H1 (cell line): ENCODE measurements at regions of chr12 and their contacts with region 1.

Region 1: DNA sequence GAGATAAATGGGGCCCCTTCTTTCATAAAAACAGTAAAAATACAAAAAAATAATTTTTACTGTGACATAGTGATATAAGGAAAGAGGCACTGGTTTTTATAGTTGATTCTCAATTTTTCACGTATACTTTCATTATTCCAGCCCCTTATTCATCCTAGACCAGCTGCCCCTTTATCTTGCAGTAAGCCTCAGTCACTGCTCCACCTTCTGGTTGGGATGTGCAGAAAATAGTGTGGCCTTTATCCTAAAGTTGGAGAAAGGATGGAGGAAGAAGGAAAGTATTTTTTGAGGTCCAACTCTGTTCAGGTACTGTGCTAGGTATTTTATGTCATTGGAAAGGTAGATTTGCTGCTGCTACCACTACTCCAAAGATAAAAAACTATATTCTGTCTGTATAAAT is 172.7 kb downstream of the ANO6 start:
- DNase-seq: no peak
- H3K4me3 ChIP-seq: no peak overlapping the region; a peak in 1 of 8 replicates
- H3K27ac ChIP-seq: no peak overlapping the region
- H3K4me1 ChIP-seq: no peaks in the 10 kb centered on the region
- H3K27me3 ChIP-seq: no peaks in the 10 kb centered on the region
- CTCF ChIP-seq: peak in 2 of 3 experiments; percentile 66 to 68; a peak in 3 of 4 replicates
- EP300 ChIP-seq: no peak
- POLR2A ChIP-seq: no peak
- RAD21 ChIP-seq: peak; percentile 67 to 72

Region 2: GRCh38 chr12:45170456-45171042 is 218.0 kb before region 1 on chr12:
- CTCF ChIA-PET with region 1: interaction called, 34 read pairs
- POLR2A ChIA-PET with region 1: interaction called, 5 read pairs
- DNase-seq: peak; percentile 39 to 94
- H3K4me3 ChIP-seq: no peak overlapping the region
- H3K27ac ChIP-seq: no peak overlapping the region
- H3K4me1 ChIP-seq: no peaks in the 10 kb centered on the region
- H3K27me3 ChIP-seq: no peaks in the 10 kb centered on the region
- CTCF ChIP-seq: peak; percentile 78 to 89 (median 82)
- EP300 ChIP-seq: no peak
- POLR2A ChIP-seq: no peak
- RAD21 ChIP-seq: peak; percentile 85 to 87

Region 3: DNA sequence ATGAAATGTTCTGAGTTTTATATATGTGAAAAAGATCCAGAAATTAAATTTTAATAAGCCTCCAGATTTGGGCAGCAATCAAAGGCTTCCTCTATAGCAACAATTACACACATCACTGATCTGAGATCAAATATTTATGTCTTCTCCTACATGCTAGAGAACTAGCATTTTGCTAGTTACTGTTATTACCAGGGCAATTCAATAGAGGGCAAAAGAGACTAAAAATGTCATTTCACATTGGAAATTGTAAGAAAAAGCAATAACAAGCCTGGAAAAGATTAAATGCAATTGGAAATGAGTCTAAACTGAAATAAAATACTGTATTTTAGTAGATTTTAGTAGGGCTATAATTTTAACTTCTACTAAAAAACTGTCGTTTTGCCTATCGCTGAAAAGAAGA is 205.3 kb before region 1 on chr12:
- CTCF ChIA-PET with region 1: interaction called, 12 read pairs
- POLR2A ChIA-PET with region 1: no interaction called
- DNase-seq: no peak
- H3K4me3 ChIP-seq: no peak overlapping the region
- H3K27ac ChIP-seq: no peak overlapping the region
- H3K4me1 ChIP-seq: no peaks in the 10 kb centered on the region
- H3K27me3 ChIP-seq: no peaks in the 10 kb centered on the region
- CTCF ChIP-seq: peak in 1 of 3 experiments; percentile 31; a peak in 2 of 4 replicates
- EP300 ChIP-seq: no peak
- POLR2A ChIP-seq: no peak
- RAD21 ChIP-seq: peak in 1 of 2 experiments; percentile 44; a peak in 3 of 4 replicates

Region 4: GRCh38 chr12:45215419-45216229 is 172.9 kb before region 1 on chr12 and contains the start of gene ANO6:
- CTCF ChIA-PET with region 1: interaction called, 10 read pairs
- POLR2A ChIA-PET with region 1: no interaction called
- DNase-seq: peak in 1 of 2 experiments; percentile 89
- H3K4me3 ChIP-seq: peak within 1 kb of the TSS; percentile 70 to 98 (median 84)
- H3K27ac ChIP-seq: peak within 1 kb of the TSS; percentile 86
- H3K4me1 ChIP-seq: peaks cover 0 to 15% (median 9%) of the 10 kb centered on the region in 4 experiments; a peak in 4 of 7 replicates
- H3K27me3 ChIP-seq: no peaks in the 10 kb centered on the region
- CTCF ChIP-seq: peak in 1 of 3 experiments; percentile 4; a peak in 1 of 4 replicates
- EP300 ChIP-seq: no peak
- POLR2A ChIP-seq: peak; percentile 74 to 80
- RAD21 ChIP-seq: 0 out of 4 replicates have a peak, but pooled peaks of 1 of the 2 experiments have one; percentile 7
- total RNA-seq, gene ANO6: 37.6 and 39.7 TPM in 2 replicates

Region 5: GRCh38 chr12:45268672-45269411 is 119.7 kb before region 1 on chr12:
- CTCF ChIA-PET with region 1: interaction called, 16 read pairs
- POLR2A ChIA-PET with region 1: no interaction called
- DNase-seq: no peak
- H3K4me3 ChIP-seq: no peak overlapping the region
- H3K27ac ChIP-seq: no peak overlapping the region
- H3K4me1 ChIP-seq: peaks cover 0 to 11% (median 4%) of the 10 kb centered on the region in 4 experiments; a peak in 3 of 7 replicates
- H3K27me3 ChIP-seq: no peaks in the 10 kb centered on the region
- CTCF ChIP-seq: peak in 2 of 3 experiments; percentile 14 to 36; a peak in 2 of 4 replicates
- EP300 ChIP-seq: no peak
- POLR2A ChIP-seq: no peak
- RAD21 ChIP-seq: peak; percentile 53 to 60

Region 6: GRCh38 chr12:45284131-45284901 is 104.2 kb before region 1 on chr12:
- CTCF ChIA-PET with region 1: interaction called, 11 read pairs
- POLR2A ChIA-PET with region 1: no interaction called
- DNase-seq: no peak
- H3K4me3 ChIP-seq: no peak overlapping the region
- H3K27ac ChIP-seq: no peak overlapping the region
- H3K4me1 ChIP-seq: peaks cover 2 to 9% (median 6%) of the 10 kb centered on the region in 4 experiments; a peak in 4 of 7 replicates
- H3K27me3 ChIP-seq: no peaks in the 10 kb centered on the region
- CTCF ChIP-seq: peak; percentile 10 to 33 (median 33)
- EP300 ChIP-seq: no peak
- POLR2A ChIP-seq: no peak
- RAD21 ChIP-seq: peak; percentile 44 to 54

Region 7: DNA sequence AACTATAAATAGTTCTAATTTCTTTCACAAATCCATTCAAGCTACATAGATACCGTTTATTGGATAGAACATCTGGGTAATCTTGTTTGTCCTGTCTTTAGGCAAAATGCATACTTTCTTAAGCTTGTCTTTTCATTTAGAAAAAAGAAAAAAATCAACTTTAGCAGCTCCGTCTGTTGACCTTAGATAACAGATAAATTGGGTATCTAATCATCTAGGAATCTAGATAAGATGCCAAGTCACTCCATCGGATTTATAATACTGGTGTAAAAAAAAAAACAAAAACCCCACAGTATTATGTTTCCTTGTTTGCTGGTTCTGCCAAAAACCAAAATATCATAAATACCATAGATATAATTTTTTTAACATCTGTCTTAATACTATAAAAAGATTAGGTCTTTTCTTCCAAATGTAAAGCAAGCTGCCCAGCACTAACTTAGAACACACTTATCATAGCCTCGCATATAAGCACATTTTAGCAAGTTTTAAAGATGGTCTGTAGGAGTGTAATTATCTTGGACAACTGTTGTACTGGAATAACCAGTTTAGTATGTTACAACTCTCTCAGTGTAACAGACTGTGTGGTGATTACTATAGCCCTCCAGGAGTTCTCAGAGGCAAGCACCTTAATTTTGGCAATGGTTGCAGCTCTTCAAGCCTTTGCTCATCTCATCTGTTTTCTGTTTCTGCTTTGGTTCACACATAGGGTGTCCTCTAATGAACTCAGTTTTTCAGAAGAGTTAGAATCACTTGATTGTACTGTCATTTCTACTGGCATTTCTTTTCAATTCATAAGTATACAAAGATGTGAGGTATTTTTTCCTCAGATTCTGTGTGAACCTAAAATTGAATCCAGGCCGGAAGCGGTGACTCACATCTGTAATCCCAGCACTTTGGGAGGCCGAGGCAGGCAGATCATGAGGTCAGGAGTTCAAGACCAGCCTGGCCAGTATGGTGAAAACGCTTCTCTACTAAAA is 89.5 kb before region 1 on chr12:
- CTCF ChIA-PET with region 1: no interaction called
- POLR2A ChIA-PET with region 1: no interaction called
- DNase-seq: no peak
- H3K4me3 ChIP-seq: no peak overlapping the region
- H3K27ac ChIP-seq: no peak overlapping the region
- H3K4me1 ChIP-seq: no peaks in the 10 kb centered on the region
- H3K27me3 ChIP-seq: peaks cover 0 to 1% (median 0%) of the 10 kb centered on the region in 4 experiments; a peak in 1 of 7 replicates
- CTCF ChIP-seq: no peak
- EP300 ChIP-seq: no peak
- POLR2A ChIP-seq: no peak
- RAD21 ChIP-seq: no peak

Region 8: DNA sequence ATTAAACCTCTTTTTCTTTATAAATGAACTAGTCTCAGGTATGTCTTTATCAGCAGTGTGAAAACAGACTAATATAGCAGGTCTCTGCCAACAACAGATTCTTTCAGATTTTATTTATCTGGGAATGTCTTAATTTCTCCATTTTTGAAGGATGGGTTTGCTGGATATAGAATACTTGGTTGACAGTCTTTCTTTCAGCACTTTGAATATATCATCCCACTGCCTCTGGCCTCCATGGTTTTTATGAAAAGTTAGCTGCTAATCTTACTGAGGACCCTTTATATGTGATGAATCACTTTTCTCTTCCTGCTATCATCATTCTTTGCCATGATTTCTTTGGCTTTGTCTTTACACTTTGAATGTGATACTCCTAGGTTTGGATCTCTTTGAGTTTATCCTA is 24.6 kb before region 1 on chr12:
- CTCF ChIA-PET with region 1: interaction called, 12 read pairs
- POLR2A ChIA-PET with region 1: no interaction called
- DNase-seq: no peak
- H3K4me3 ChIP-seq: no peak overlapping the region
- H3K27ac ChIP-seq: no peak overlapping the region
- H3K4me1 ChIP-seq: no peaks in the 10 kb centered on the region
- H3K27me3 ChIP-seq: no peaks in the 10 kb centered on the region
- CTCF ChIP-seq: no peak
- EP300 ChIP-seq: no peak
- POLR2A ChIP-seq: no peak
- RAD21 ChIP-seq: no peak

Region 9: GRCh38 chr12:45509187-45509586 is 120.6 kb after region 1 on chr12:
- CTCF ChIA-PET with region 1: no interaction called
- POLR2A ChIA-PET with region 1: no interaction called
- DNase-seq: no peak
- H3K4me3 ChIP-seq: no peak overlapping the region
- H3K27ac ChIP-seq: no peak overlapping the region
- H3K4me1 ChIP-seq: no peaks in the 10 kb centered on the region
- H3K27me3 ChIP-seq: no peaks in the 10 kb centered on the region
- CTCF ChIP-seq: no peak
- EP300 ChIP-seq: no peak
- POLR2A ChIP-seq: no peak
- RAD21 ChIP-seq: no peak